GM12878 (cell line): ENCODE measurements at regions of chr19 and their contacts with region 1.

Region 1: GRCh38 chr19:2610637-2611482 is 91.6 kb downstream of the GNG7 start:
- DNase-seq: peak; percentile 91
- ATAC-seq: peak; percentile 58
- H3K4me3 ChIP-seq: peak overlapping the region; percentile 72; the same call in 1 of the 2 replicates
- H3K27ac ChIP-seq: peak overlapping the region; percentile 96
- H3K4me1 ChIP-seq: peaks cover 46% of the 10 kb centered on the region
- H3K27me3 ChIP-seq: no peaks in the 10 kb centered on the region
- CTCF ChIP-seq: peak; percentile 93 to 97 (median 94); a peak in 5 of 6 replicates
- EP300 ChIP-seq: peak; percentile 68 to 90; a peak in 3 of 4 replicates
- POLR2A ChIP-seq: no peak; the same call in 1 of the 2 replicates
- RAD21 ChIP-seq: peak; percentile 91

Region 2: GRCh38 chr19:2391118-2391725 is 219.6 kb before region 1 on chr19:
- CTCF ChIA-PET with region 1: interaction called, 66 read pairs
- POLR2A ChIA-PET with region 1: interaction called, 3 read pairs
- RAD21 ChIA-PET with region 1: interaction called, 31 read pairs
- SMC1A ChIA-PET with region 1: interaction called, 4 read pairs
- in situ Hi-C with region 1: loop called (anchors 5 kb)
- intact Hi-C with region 1: loop called (anchors 10 kb)
- DNase-seq: peak; percentile 21
- ATAC-seq: peak; percentile 50
- H3K4me3 ChIP-seq: no peak overlapping the region
- H3K27ac ChIP-seq: no peak overlapping the region
- H3K4me1 ChIP-seq: peaks cover 9% of the 10 kb centered on the region
- H3K27me3 ChIP-seq: no peaks in the 10 kb centered on the region; a peak in 1 of 4 replicates
- CTCF ChIP-seq: peak; percentile 73 to 82 (median 77)
- EP300 ChIP-seq: no peak
- POLR2A ChIP-seq: no peak
- RAD21 ChIP-seq: peak; percentile 91

Region 3: GRCh38 chr19:2475702-2476450 is 135.0 kb before region 1 on chr19 and contains the start of gene GADD45B:
- CTCF ChIA-PET with region 1: interaction called, 113 read pairs
- POLR2A ChIA-PET with region 1: interaction called, 166 read pairs
- RAD21 ChIA-PET with region 1: interaction called, 221 read pairs
- SMC1A ChIA-PET with region 1: interaction called, 143 read pairs
- in situ Hi-C with region 1: loop called (anchors 5 kb)
- intact Hi-C with region 1: loop called (anchors 1 kb)
- DNase-seq: peak; percentile 94
- ATAC-seq: peak; percentile 54
- H3K4me3 ChIP-seq: peak within 1 kb of the TSS; percentile 100
- H3K27ac ChIP-seq: peak within 1 kb of the TSS; percentile 95
- H3K4me1 ChIP-seq: peaks cover 12% of the 10 kb centered on the region
- H3K27me3 ChIP-seq: no peaks in the 10 kb centered on the region
- CTCF ChIP-seq: no peak
- EP300 ChIP-seq: peak in 1 of 2 experiments; percentile 17; a peak in 1 of 4 replicates
- POLR2A ChIP-seq: peak; percentile 100
- RAD21 ChIP-seq: no peak; the same call in 1 of the 2 replicates
- polyA plus RNA-seq, gene GADD45B: 2.4 to 10.5 TPM

Region 4: DNA sequence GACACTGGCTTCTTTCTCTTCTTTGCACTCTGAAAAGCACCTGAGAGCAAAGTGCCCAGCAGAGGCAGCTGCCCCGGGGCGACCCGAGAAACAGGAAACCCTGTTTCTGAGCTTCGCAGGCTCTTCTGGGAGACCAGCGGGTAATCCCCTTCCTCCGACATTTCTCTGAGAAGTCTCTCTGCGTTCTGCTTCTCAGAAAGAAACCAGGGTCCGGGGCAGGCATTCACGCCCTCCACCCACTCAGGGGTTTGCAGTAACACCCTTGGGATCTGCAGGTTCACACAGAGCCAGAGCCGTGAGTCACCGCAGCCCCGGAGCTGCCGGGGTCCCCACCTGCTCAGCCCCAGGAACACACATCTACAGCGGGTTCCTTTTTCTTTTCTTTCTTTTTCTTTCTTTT is 49.0 kb before region 1 on chr19:
- CTCF ChIA-PET with region 1: interaction called, 49 read pairs
- POLR2A ChIA-PET with region 1: interaction called, 23 read pairs
- RAD21 ChIA-PET with region 1: interaction called, 60 read pairs
- SMC1A ChIA-PET with region 1: interaction called, 43 read pairs
- in situ Hi-C with region 1: no loop called
- intact Hi-C with region 1: loop called (anchors 1 kb)
- DNase-seq: peak; percentile 92
- ATAC-seq: peak; percentile 89
- H3K4me3 ChIP-seq: peak overlapping the region; percentile 61
- H3K27ac ChIP-seq: peak overlapping the region; percentile 98
- H3K4me1 ChIP-seq: peaks cover 28% of the 10 kb centered on the region
- H3K27me3 ChIP-seq: no peaks in the 10 kb centered on the region
- CTCF ChIP-seq: no peak
- EP300 ChIP-seq: peak; percentile 87
- POLR2A ChIP-seq: peak; percentile 65; the same call in 1 of the 2 replicates
- RAD21 ChIP-seq: peak; percentile 31; the same call in 1 of the 2 replicates

Region 5: DNA sequence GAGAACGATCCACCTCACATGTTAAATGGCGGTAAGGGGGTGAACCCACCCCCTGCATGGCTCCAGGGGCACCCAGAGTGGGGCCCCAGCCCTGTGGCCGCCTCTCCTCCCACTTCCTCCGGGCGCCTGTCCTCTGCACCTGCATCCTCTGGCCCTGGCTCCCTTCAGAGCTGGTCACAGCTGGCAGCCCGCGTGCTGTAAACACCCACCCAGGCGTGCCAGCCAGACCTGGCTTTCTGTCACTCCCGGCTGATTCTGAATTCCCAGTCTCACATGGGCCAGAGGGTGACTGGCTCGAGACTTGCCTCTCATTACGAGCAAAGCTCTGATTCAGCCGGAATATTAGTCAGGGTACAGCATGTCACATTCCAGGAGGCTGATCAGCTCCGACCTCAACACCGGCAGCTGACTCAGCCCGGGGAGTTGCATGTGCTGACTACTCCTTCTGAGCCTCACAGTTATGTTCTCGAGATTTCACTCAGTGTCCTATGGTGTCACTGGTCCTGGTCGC is 16.5 kb after region 1 on chr19:
- CTCF ChIA-PET with region 1: interaction called, 318 read pairs
- POLR2A ChIA-PET with region 1: interaction called, 32 read pairs
- RAD21 ChIA-PET with region 1: interaction called, 74 read pairs
- SMC1A ChIA-PET with region 1: interaction called, 49 read pairs
- in situ Hi-C with region 1: no loop called
- intact Hi-C with region 1: no loop called
- DNase-seq: no peak
- ATAC-seq: peak; percentile 52
- H3K4me3 ChIP-seq: no peak overlapping the region
- H3K27ac ChIP-seq: peak overlapping the region; percentile 45
- H3K4me1 ChIP-seq: peaks cover 55% of the 10 kb centered on the region
- H3K27me3 ChIP-seq: no peaks in the 10 kb centered on the region
- CTCF ChIP-seq: no peak
- EP300 ChIP-seq: no peak
- POLR2A ChIP-seq: peak; percentile 54; the same call in 1 of the 2 replicates
- RAD21 ChIP-seq: no peak

Region 6: GRCh38 chr19:2653710-2654707 is 43.1 kb after region 1 on chr19:
- CTCF ChIA-PET with region 1: no interaction called
- POLR2A ChIA-PET with region 1: no interaction called
- RAD21 ChIA-PET with region 1: no interaction called
- SMC1A ChIA-PET with region 1: no interaction called
- in situ Hi-C with region 1: no loop called
- intact Hi-C with region 1: no loop called
- DNase-seq: no peak
- ATAC-seq: no peak
- H3K4me3 ChIP-seq: no peak overlapping the region
- H3K27ac ChIP-seq: no peak overlapping the region; the same call in 1 of the 2 replicates
- H3K4me1 ChIP-seq: peaks cover 18% of the 10 kb centered on the region
- H3K27me3 ChIP-seq: no peaks in the 10 kb centered on the region
- CTCF ChIP-seq: no peak
- EP300 ChIP-seq: no peak
- POLR2A ChIP-seq: no peak
- RAD21 ChIP-seq: no peak